ENCODE measurements at regions of chr15 and their contacts with region 1.

Region 1: GRCh38 chr15:54909236-54909635 is 287.5 kb downstream of the RSL24D1 start:
- DNase-seq: no peak
- ATAC-seq: no peak
- H3K4me3 ChIP-seq: no peak overlapping the region
- H3K27ac ChIP-seq: no peak overlapping the region
- H3K4me1 ChIP-seq: no peaks in the 10 kb centered on the region
- H3K27me3 ChIP-seq: no peaks in the 10 kb centered on the region
- CTCF ChIP-seq: no peak
- EP300 ChIP-seq: no peak
- POLR2A ChIP-seq: no peak
- RAD21 ChIP-seq: no peak

Region 2: DNA sequence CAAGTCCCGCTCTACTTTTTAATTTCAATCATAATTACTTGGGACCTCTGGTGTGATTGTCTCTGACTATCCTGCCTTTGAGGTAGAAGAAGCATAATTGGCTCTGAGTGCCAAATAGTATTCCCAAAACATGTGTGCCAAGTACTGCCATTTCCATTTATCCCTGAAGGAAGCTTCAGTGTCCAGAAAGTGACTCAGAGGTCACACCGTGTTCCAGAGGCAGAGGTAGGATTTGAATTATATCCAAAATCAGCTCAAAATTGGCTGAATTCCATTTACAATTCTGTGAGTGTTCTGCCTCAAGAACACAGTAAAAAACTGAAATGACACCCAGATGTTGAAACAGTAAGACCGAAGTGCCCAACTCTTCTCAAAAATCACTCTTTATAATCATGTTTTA is 32.2 kb after region 1 on chr15:
- CTCF ChIA-PET with region 1: no interaction called
- POLR2A ChIA-PET with region 1: no interaction called
- in situ Hi-C with region 1: no loop called
- intact Hi-C with region 1: loop called (anchors 1 kb)
- DNase-seq: no peak
- ATAC-seq: no peak
- H3K4me3 ChIP-seq: no peak overlapping the region
- H3K27ac ChIP-seq: no peak overlapping the region
- H3K4me1 ChIP-seq: no peaks in the 10 kb centered on the region
- H3K27me3 ChIP-seq: no peaks in the 10 kb centered on the region
- CTCF ChIP-seq: no peak
- EP300 ChIP-seq: no peak
- POLR2A ChIP-seq: no peak
- RAD21 ChIP-seq: no peak